Adrenal gland (tissue), 19 donors: ENCODE measurements at regions of chr11 and their contacts with region 1.

Region 1: DNA sequence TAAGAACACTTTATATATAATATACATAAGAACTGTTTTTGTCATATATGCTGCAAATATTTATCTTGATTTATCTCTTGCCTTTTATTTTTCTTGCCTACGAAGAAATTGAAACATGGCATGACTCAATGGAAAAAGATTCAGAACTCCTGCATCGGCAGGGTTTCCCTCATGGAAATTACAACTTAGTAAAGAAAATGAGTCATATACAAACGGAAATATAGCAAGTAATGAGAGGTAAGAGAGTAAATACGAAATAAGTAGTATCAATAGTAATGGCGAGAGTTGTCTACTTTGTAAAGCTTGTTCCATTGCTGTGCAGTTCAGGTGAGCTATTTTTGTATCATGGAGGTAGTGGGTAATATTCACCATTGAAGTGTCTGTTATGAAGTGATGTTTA is 350.4 kb downstream of the DDX10 start:
- DNase-seq: no peak
- H3K4me3 ChIP-seq: no peak overlapping the region
- H3K27ac ChIP-seq: no peak overlapping the region
- H3K4me1 ChIP-seq: no peaks in the 10 kb centered on the region
- H3K27me3 ChIP-seq: no peaks in the 10 kb centered on the region
- CTCF ChIP-seq: no peak
- POLR2A ChIP-seq: no peak

Region 2: DNA sequence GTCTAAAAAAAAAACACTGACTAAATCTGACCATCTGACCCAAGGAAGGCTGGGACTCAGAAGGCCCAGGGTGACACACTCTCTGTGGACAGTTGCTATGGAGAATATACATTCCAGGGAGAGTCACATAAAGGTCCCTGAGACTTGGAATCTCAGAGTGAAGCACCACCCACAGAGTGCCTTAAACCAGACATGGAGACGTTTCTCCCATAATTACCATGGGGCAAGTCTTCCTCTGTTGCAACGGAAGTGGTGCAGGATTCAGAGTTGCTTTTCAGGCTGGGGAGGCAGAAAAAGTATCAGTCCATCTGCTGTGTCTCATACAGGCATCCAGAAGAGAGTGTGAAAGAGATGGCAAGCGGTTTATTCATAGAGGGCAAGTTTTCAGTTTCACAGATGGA is 1244.7 kb before region 1 on chr11:
- intact Hi-C with region 1: no loop called
- DNase-seq: no peak
- H3K4me3 ChIP-seq: no peak overlapping the region
- H3K27ac ChIP-seq: no peak overlapping the region
- H3K4me1 ChIP-seq: no peaks in the 10 kb centered on the region
- H3K27me3 ChIP-seq: peaks cover 8% of the 10 kb centered on the region
- CTCF ChIP-seq: no peak
- POLR2A ChIP-seq: no peak

Region 3: GRCh38 chr11:108561535-108561991 is 453.7 kb before region 1 on chr11:
- intact Hi-C with region 1: loop called in 1 of 2 experiments (anchors 10 kb)
- DNase-seq: no peak
- H3K4me3 ChIP-seq: no peak overlapping the region
- H3K27ac ChIP-seq: no peak overlapping the region
- H3K4me1 ChIP-seq: no peaks in the 10 kb centered on the region
- H3K27me3 ChIP-seq: no peaks in the 10 kb centered on the region
- CTCF ChIP-seq: no peak
- POLR2A ChIP-seq: no peak